Prostate gland (tissue), 2 donors: ENCODE measurements at regions of chr6 and their contacts with region 1.

Region 1: GRCh38 chr6:160431226-160431625 is 83.0 kb downstream of the SLC22A3 start:
- DNase-seq: no peak
- H3K4me3 ChIP-seq: no peak overlapping the region
- H3K27ac ChIP-seq: peak overlapping the region; percentile 49
- H3K4me1 ChIP-seq: peaks cover 7% of the 10 kb centered on the region
- H3K27me3 ChIP-seq: no peaks in the 10 kb centered on the region
- CTCF ChIP-seq: no peak
- POLR2A ChIP-seq: no peak

Region 2: DNA sequence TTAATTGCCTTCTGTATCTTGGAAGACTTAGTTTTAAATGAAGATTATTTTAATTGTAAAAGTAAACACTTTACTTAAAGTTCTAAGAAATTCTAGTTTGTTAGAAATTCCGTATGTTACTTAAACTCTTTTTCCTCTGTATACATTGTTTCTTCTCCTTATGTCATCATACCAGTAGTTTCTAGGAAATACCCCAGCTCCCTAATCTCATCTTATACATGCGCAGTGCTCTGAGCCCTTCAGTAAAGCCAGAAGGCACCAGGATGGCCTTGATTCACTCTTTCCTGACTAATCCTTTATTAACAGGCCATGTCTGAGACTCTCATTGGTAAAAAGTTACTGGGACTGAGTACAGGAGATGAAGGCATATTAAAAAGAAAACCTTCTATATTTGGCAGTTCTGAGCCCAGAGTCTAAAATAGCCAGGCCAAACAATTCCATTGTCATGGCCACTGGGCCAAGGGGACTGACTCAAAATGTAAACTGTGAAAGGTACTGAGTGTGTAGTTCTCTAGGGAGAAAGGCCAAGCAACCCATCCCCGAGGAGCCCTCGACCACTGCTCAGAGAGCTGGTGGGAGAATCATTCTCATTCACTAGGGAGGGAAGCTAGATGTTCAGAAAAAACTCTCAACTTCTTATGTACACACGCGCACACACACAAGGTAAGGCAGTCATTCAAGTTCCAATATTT is 284.6 kb before region 1 on chr6:
- intact Hi-C with region 1: loop called (anchors 2 kb)
- DNase-seq: no peak
- H3K4me3 ChIP-seq: no peak overlapping the region
- H3K27ac ChIP-seq: peak overlapping the region; percentile 45 to 57
- H3K4me1 ChIP-seq: peaks cover 11% of the 10 kb centered on the region
- H3K27me3 ChIP-seq: no peaks in the 10 kb centered on the region
- CTCF ChIP-seq: no peak
- POLR2A ChIP-seq: no peak

Region 3: GRCh38 chr6:160215232-160215631 is 216.0 kb before region 1 on chr6:
- intact Hi-C with region 1: no loop called
- DNase-seq: no peak
- H3K4me3 ChIP-seq: no peak overlapping the region
- H3K27ac ChIP-seq: no peak overlapping the region
- H3K4me1 ChIP-seq: no peaks in the 10 kb centered on the region
- H3K27me3 ChIP-seq: no peaks in the 10 kb centered on the region
- CTCF ChIP-seq: no peak
- POLR2A ChIP-seq: no peak

Region 4: DNA sequence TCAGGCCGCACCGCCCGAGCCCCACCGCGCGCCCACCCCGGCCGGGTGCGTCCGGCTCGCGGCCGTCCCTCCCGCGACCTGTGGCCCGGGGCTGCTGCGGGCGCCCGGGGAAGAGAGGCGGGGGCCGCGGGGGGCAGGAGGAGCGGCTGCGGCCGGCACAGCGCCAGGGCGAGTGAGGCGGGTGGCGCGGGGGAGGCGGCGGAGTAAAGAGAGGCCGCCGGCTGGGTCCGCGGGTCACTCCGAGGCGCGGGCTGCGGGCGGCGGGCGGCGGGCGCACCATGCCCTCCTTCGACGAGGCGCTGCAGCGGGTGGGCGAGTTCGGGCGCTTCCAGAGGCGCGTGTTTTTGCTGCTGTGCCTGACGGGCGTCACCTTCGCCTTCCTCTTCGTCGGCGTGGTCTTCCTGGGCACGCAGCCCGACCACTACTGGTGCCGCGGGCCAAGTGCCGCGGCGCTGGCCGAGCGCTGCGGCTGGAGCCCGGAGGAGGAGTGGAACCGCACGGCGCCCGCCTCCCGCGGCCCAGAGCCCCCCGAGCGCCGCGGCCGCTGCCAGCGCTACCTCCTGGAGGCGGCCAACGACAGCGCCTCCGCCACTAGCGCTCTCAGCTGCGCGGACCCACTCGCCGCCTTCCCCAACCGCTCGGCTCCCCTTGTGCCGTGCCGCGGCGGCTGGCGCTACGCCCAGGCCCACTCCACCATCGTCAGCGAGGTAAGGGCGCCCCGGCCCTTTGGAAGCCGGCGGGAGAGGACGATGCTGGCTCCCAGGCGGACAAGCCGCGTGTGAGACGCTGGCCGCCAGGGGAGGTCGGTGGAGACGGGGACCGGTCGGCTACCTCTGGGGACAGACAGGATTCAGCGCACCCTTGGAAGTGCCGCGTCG is 82.8 kb before region 1 on chr6 and contains the start of gene SLC22A3:
- intact Hi-C with region 1: loop called (anchors 5 kb)
- DNase-seq: peak; percentile 40
- H3K4me3 ChIP-seq: peak within 1 kb of the TSS; percentile 63 to 79
- H3K27ac ChIP-seq: peak within 1 kb of the TSS; percentile 83 to 89
- H3K4me1 ChIP-seq: no peaks in the 10 kb centered on the region
- H3K27me3 ChIP-seq: no peaks in the 10 kb centered on the region
- CTCF ChIP-seq: peak in 2 of 4 experiments; percentile 45 to 49
- POLR2A ChIP-seq: no peak
- total RNA-seq, gene SLC22A3: 50.2 to 118 TPM